Breast epithelium (tissue), 4 donors: ENCODE measurements at regions of chr16 and their contacts with region 1.

Region 1: DNA sequence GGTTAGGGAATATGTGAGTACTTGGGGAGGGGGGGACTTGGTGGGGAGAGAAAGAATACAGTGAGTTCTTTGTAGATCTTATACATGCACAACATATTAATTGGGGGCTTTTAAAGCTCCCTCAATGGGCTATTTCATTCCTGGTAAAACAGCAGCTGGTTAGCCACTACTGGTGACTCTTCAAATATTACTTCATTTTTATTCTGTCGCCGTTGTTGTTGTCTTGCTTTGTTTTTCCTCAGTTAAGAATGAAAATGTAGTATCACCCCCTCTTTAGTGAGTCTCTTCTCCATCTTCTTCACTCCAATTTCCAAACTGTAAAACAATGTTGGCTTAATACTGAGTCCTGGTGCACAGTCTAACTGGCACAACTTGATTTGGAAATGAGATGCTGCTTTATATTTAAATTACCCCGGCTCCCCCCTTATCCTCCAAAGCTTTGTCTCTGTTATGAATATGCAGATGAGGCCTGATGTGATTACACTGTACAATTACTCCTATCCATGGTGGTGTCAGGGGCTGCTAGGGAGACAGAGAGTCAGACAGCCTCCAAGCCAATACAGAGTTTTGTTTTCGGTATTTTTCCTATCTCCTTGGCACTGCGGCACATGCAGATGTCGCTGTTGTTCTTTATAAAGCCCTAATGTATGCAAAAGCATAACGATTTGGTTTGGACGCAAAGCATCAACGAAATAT is 256.9 kb upstream of the PMFBP1 start:
- DNase-seq: no peak
- H3K4me3 ChIP-seq: no peak overlapping the region
- H3K27ac ChIP-seq: no peak overlapping the region
- H3K4me1 ChIP-seq: no peaks in the 10 kb centered on the region
- H3K27me3 ChIP-seq: no peaks in the 10 kb centered on the region
- CTCF ChIP-seq: no peak
- POLR2A ChIP-seq: no peak

Region 2: DNA sequence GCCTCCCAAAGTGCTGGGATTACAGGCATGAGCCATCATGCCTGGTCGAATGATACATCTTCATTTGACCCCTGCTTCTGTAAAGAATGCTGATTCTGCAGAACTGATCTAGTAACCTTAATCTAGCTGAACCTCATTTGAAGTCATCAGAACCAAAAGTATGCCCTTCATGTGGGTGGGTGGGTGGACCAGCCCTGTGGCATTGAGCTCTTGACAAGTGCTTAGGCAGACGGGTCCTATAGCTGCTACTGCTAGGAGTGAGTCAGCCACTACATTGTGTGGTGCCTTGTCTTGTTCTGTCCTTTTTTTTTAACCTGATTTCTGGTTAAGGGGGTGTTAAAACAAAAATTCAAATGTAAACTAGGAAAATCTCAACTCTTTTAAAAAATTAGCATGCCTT is 1875.7 kb before region 1 on chr16:
- intact Hi-C with region 1: no loop called
- DNase-seq: no peak
- H3K4me3 ChIP-seq: no peak overlapping the region
- H3K27ac ChIP-seq: peak overlapping the region; percentile 59 to 80
- H3K4me1 ChIP-seq: no peaks in the 10 kb centered on the region
- H3K27me3 ChIP-seq: no peaks in the 10 kb centered on the region
- CTCF ChIP-seq: no peak
- POLR2A ChIP-seq: no peak

Region 3: GRCh38 chr16:72384651-72385050 is 44.2 kb before region 1 on chr16:
- intact Hi-C with region 1: loop called (anchors 2 kb)
- DNase-seq: no peak
- H3K4me3 ChIP-seq: no peak overlapping the region
- H3K27ac ChIP-seq: no peak overlapping the region
- H3K4me1 ChIP-seq: no peaks in the 10 kb centered on the region
- H3K27me3 ChIP-seq: no peaks in the 10 kb centered on the region
- CTCF ChIP-seq: no peak
- POLR2A ChIP-seq: no peak